CD14-positive monocyte (primary cell): ENCODE measurements at regions of chr12 and their contacts with region 1.

Region 1: DNA sequence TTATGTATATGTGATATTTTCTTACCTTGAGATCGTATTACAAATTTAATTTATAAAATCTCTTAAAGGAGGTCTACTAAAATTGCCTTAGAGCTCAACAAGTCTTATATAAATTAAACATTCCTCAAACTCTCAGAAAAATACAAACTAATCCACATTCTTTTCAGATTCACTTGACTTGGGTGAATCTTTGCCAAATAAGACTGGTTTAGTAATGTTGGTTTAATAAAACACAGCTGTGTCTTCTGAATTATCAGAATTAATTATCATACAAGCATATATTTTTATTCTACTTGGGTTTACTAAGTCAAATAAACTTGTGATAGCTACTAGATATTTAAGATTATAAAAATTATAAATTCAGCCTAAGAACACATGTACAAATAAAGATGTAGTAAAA is 13.3 kb downstream of the GLIPR1L2 start:
- DNase-seq: no peak
- H3K4me3 ChIP-seq: no peak overlapping the region
- H3K4me3 Mint-ChIP-seq: no peak overlapping the region
- H3K27ac ChIP-seq: no peak overlapping the region
- H3K27ac Mint-ChIP-seq: no peak overlapping the region
- H3K4me1 ChIP-seq: no peaks in the 10 kb centered on the region
- H3K4me1 Mint-ChIP-seq: no peaks in the 10 kb centered on the region
- H3K27me3 ChIP-seq: no peaks in the 10 kb centered on the region
- H3K27me3 Mint-ChIP-seq: peaks cover 0 to 1% (median 0%) of the 10 kb centered on the region in 3 donors
- CTCF ChIP-seq: no peak

Region 2: GRCh38 chr12:75212072-75212471 is 192.2 kb before region 1 on chr12:
- intact Hi-C with region 1: no loop called
- DNase-seq: no peak
- H3K4me3 ChIP-seq: no peak overlapping the region
- H3K4me3 Mint-ChIP-seq: no peak overlapping the region
- H3K27ac ChIP-seq: no peak overlapping the region
- H3K27ac Mint-ChIP-seq: no peak overlapping the region
- H3K4me1 ChIP-seq: no peaks in the 10 kb centered on the region
- H3K4me1 Mint-ChIP-seq: peaks cover 4% of the 10 kb centered on the region
- H3K27me3 ChIP-seq: peaks cover 28 to 34% of the 10 kb centered on the region in 2 donors
- H3K27me3 Mint-ChIP-seq: peaks cover 32 to 43% (median 38%) of the 10 kb centered on the region in 3 donors
- CTCF ChIP-seq: no peak

Region 3: DNA sequence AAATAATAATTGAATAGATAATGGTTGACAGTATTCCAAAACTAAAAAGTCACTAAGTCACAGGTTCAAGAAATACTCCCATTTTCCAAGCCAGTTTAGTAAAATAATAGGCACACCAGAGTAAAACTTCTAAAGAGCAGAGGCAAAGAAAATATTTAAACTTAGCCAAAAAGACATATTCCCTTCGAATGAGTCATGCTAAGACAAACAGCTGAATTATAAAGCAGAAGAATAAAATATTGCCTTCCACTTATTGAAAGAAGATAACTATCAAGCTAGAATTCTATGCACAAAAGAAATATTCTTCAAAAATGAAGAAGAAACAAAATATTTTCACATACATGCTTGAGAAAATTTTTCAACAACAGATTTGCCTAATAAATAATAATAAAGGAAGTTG is 178.7 kb before region 1 on chr12:
- intact Hi-C with region 1: no loop called
- DNase-seq: no peak
- H3K4me3 ChIP-seq: no peak overlapping the region
- H3K4me3 Mint-ChIP-seq: no peak overlapping the region
- H3K27ac ChIP-seq: no peak overlapping the region
- H3K27ac Mint-ChIP-seq: no peak overlapping the region
- H3K4me1 ChIP-seq: no peaks in the 10 kb centered on the region
- H3K4me1 Mint-ChIP-seq: no peaks in the 10 kb centered on the region
- H3K27me3 ChIP-seq: no peaks in the 10 kb centered on the region
- H3K27me3 Mint-ChIP-seq: peaks cover 0 to 1% (median 0%) of the 10 kb centered on the region in 3 donors
- CTCF ChIP-seq: no peak

Region 4: DNA sequence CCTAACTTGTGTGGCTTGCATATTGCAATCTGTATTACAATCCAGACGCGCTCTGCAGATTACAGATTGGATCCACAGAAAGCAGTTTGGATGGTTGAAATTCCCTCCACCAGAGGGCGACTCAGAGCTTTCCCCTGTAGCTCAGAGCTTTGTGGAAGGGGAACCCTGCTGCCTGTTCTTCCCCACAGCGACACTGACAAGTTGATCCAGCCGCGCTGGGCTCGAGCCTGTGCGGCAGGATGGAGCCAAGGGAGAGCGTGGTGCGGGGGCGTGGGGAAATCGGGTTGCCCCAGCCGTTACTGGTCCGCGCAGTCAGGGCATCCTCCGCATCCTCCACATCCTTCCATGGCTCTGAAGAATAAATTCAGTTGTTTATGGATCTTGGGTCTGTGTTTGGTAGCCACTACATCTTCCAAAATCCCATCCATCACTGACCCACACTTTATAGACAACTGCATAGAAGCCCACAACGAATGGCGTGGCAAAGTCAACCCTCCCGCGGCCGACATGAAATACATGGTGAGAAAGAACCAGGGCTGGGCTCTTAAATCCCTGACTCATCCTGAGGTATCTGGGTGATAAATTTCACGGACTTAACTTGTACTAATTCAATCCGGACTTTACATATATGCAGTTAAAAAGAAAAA is 69.7 kb before region 1 on chr12 and contains the start of gene GLIPR1L1:
- intact Hi-C with region 1: loop called in 1 of 2 experiments (anchors 10 kb)
- DNase-seq: peak; percentile 76 to 87 (median 83)
- H3K4me3 ChIP-seq: peak within 1 kb of the TSS; percentile 11 to 69 (median 12)
- H3K4me3 Mint-ChIP-seq: peak within 1 kb of the TSS; percentile 71 to 90
- H3K27ac ChIP-seq: no peak within 1 kb of the TSS
- H3K27ac Mint-ChIP-seq: peak within 1 kb of the TSS in 1 of 7 donors; percentile 72
- H3K4me1 ChIP-seq: peaks cover 16 to 18% of the 10 kb centered on the region in 2 donors
- H3K4me1 Mint-ChIP-seq: peaks cover 18% of the 10 kb centered on the region
- H3K27me3 ChIP-seq: peaks cover 0 to 6% of the 10 kb centered on the region in 2 donors
- H3K27me3 Mint-ChIP-seq: peaks cover 4 to 14% (median 9%) of the 10 kb centered on the region in 3 donors
- CTCF ChIP-seq: peak; percentile 89
- polyA plus RNA-seq, gene GLIPR1L1: not detected

Region 5: GRCh38 chr12:75452675-75453330 is 48.6 kb after region 1 on chr12:
- intact Hi-C with region 1: no loop called
- DNase-seq: no peak
- H3K4me3 ChIP-seq: no peak overlapping the region
- H3K4me3 Mint-ChIP-seq: no peak overlapping the region
- H3K27ac ChIP-seq: no peak overlapping the region
- H3K27ac Mint-ChIP-seq: peak overlapping the region in 1 of 7 donors; percentile 50
- H3K4me1 ChIP-seq: peaks cover 19 to 40% of the 10 kb centered on the region in 2 donors
- H3K4me1 Mint-ChIP-seq: peaks cover 36% of the 10 kb centered on the region
- H3K27me3 ChIP-seq: no peaks in the 10 kb centered on the region
- H3K27me3 Mint-ChIP-seq: peaks cover 0 to 1% (median 0%) of the 10 kb centered on the region in 3 donors
- CTCF ChIP-seq: no peak